Caco-2 (cell line): ENCODE measurements at regions of chr17 and their contacts with region 1.

Region 1: DNA sequence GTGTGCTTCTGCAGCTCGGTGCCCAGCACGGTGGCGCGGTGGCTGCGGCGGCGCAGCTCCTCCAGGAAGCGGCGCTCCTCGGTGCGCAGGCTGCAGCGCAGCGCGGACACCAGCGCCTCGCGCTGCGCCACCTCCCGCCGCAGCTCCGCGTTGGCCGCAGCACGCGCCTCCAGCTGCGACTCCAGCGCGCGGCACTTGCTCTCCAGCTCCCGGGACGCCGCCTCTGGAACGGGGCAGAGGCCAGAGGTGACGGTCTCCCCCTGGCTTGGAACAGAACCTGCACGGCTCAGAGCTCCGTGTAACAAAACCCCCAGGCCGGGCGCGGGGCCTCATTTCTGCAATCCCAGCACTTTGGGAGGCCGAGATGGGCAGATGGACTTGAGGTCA is 13.2 kb upstream of the CLUH start:
- DNase-seq: peak; percentile 63 to 76
- H3K4me3 ChIP-seq: peak overlapping the region; percentile 56
- H3K4me3 Mint-ChIP-seq: peak overlapping the region; percentile 61
- H3K27ac Mint-ChIP-seq: no peak overlapping the region
- H3K4me1 ChIP-seq: peaks cover 13% of the 10 kb centered on the region
- H3K4me1 Mint-ChIP-seq: peaks cover 7% of the 10 kb centered on the region
- H3K27me3 ChIP-seq: no peaks in the 10 kb centered on the region
- H3K27me3 Mint-ChIP-seq: peaks cover 3% of the 10 kb centered on the region
- CTCF ChIP-seq: no peak

Region 2: DNA sequence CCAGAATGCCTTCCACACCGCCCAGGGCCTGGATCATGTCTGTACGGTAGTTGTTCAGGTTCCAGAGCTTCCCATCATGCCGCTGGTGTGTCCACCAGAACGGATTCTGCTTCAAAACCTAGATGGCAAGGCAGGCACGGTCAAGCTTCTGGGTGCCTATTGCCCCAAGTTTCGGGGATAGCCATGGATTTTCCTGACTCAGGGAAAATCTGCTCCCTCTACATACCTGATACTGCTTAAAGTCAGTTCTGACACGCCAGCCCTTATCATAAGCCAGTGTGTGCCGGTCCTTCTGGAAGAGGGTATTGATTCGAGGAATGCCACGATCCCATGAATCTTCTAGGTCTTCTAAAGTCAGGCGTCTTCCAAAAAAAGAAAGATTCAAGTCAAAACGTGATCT is 1063.7 kb before region 1 on chr17:
- CTCF ChIA-PET with region 1: no interaction called
- POLR2A ChIA-PET with region 1: interaction called, 10 read pairs
- intact Hi-C with region 1: no loop called
- DNase-seq: no peak
- H3K4me3 ChIP-seq: no peak overlapping the region
- H3K4me3 Mint-ChIP-seq: no peak overlapping the region
- H3K27ac Mint-ChIP-seq: no peak overlapping the region
- H3K4me1 ChIP-seq: no peaks in the 10 kb centered on the region
- H3K4me1 Mint-ChIP-seq: no peaks in the 10 kb centered on the region
- H3K27me3 ChIP-seq: no peaks in the 10 kb centered on the region
- H3K27me3 Mint-ChIP-seq: no peaks in the 10 kb centered on the region
- CTCF ChIP-seq: no peak

Region 3: DNA sequence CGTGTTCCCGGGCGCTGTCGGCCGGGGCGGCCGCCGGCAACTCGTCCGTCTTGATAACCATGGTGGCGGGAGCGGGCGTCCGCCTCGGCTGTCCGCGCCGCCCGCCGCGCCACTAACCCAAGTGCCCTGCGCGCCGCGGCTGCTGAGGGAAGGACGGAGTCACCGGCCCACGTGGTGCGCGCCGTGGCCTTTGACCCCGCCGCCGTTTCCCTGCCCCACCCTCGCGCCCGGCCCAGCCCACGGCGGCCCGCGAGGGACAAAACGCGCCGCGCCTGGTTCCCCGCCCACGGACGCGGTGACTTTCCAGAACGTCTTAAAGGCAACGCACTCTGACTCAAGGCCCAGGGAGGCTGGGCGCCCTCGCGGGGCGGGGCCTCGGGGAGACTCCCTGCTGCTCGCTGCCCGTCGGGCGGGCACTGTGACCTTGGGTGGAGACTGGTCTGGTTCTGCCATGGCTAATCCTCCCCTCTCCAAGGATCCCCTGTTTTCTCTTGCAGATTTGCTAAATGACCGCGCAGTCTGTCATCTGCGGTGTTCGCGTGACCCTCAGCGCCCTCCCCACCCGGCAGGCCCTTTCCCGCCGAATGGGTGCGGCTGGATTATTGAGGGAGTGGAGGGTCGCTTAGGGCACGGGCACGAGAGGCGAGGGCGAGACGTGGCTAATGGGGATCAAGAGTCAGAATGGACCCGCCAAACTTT is 13.0 kb before region 1 on chr17 and contains the start of gene CLUH:
- CTCF ChIA-PET with region 1: interaction called, 5 read pairs
- POLR2A ChIA-PET with region 1: interaction called, 7 read pairs
- intact Hi-C with region 1: loop called (anchors 1 kb)
- DNase-seq: peak; percentile 95 to 96
- H3K4me3 ChIP-seq: peak within 1 kb of the TSS; percentile 95
- H3K4me3 Mint-ChIP-seq: peak within 1 kb of the TSS; percentile 98
- H3K27ac Mint-ChIP-seq: peak within 1 kb of the TSS; percentile 97
- H3K4me1 ChIP-seq: peaks cover 17% of the 10 kb centered on the region
- H3K4me1 Mint-ChIP-seq: peaks cover 24% of the 10 kb centered on the region
- H3K27me3 ChIP-seq: no peaks in the 10 kb centered on the region
- H3K27me3 Mint-ChIP-seq: no peaks in the 10 kb centered on the region
- CTCF ChIP-seq: no peak
- total RNA-seq, gene CLUH: 161 and 164 TPM in 2 replicates

Region 4: GRCh38 chr17:2755891-2756724 is 31.3 kb after region 1 on chr17:
- CTCF ChIA-PET with region 1: no interaction called
- POLR2A ChIA-PET with region 1: no interaction called
- intact Hi-C with region 1: no loop called
- DNase-seq: peak; percentile 44 to 55
- H3K4me3 ChIP-seq: peak overlapping the region; percentile 48
- H3K4me3 Mint-ChIP-seq: peak overlapping the region; percentile 78
- H3K27ac Mint-ChIP-seq: no peak overlapping the region
- H3K4me1 ChIP-seq: peaks cover 5% of the 10 kb centered on the region; the same call in 1 of the 2 replicates
- H3K4me1 Mint-ChIP-seq: no peaks in the 10 kb centered on the region
- H3K27me3 ChIP-seq: no peaks in the 10 kb centered on the region; the same call in 1 of the 2 replicates
- H3K27me3 Mint-ChIP-seq: peaks cover 12% of the 10 kb centered on the region
- CTCF ChIP-seq: no peak